T-cell (primary cell): ENCODE measurements at regions of chr20 and their contacts with region 1.

Region 1: GRCh38 chr20:54250691-54251090 is 42.8 kb downstream of the PFDN4 start:
- DNase-seq: no peak
- ATAC-seq: no peak
- H3K4me3 ChIP-seq: no peak overlapping the region
- H3K4me3 Mint-ChIP-seq: no peak overlapping the region
- H3K27ac ChIP-seq: no peak overlapping the region
- H3K27ac Mint-ChIP-seq: no peak overlapping the region
- H3K4me1 ChIP-seq: no peaks in the 10 kb centered on the region
- H3K4me1 Mint-ChIP-seq: no peaks in the 10 kb centered on the region
- H3K27me3 ChIP-seq: peaks cover 0 to 4% of the 10 kb centered on the region in 2 experiments
- H3K27me3 Mint-ChIP-seq: peaks cover 0 to 15% of the 10 kb centered on the region in 2 donors

Region 2: DNA sequence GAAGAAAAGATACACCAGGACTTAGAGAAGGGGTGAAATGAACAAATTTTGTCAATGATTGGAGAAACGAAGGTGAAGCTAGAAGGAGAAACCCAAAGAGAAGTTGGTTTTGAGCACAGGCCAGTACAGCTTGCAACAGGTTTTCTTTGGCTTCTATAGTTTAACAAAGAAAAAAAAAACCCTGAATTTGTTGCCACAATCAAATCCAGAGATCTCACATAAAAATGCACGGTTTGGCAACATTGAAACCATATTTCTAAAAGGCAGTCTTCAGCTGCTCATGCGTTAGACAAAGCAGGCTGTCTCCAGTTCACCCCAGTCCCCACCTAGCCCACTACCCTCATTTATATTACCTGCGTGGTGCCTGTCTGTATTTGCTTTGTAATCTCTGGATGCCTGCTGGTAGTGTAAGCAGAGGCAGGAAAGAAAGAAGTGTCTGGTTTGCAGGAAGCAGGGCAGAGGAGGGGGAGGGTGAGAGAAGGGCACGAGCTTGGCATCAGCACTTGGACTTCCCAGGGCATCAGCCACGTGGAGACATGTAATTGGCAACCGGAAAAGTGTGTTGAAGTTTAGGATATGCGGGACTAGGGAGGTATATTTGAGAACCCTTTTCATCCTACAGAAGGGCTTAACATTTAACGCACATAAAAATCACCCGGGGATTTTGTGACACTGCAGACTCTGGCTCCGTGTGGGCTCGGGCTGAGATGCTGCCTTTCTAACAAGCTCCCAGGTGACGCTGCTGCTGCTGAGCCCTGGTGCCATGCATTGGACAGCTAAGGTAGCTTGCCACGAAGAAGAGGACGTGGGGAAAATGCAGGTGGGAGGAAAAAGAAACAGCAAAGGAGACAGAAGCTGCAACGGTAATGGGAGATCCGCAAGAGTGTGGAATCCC is 28.4 kb before region 1 on chr20:
- CTCF ChIA-PET with region 1: no interaction called
- POLR2A ChIA-PET with region 1: no interaction called
- DNase-seq: no peak
- ATAC-seq: no peak
- H3K4me3 ChIP-seq: no peak overlapping the region
- H3K4me3 Mint-ChIP-seq: peak overlapping the region in 1 of 3 donors; percentile 4
- H3K27ac ChIP-seq: no peak overlapping the region
- H3K27ac Mint-ChIP-seq: peak overlapping the region; percentile 84 to 91
- H3K4me1 ChIP-seq: peaks cover 0 to 14% of the 10 kb centered on the region in 2 experiments
- H3K4me1 Mint-ChIP-seq: peaks cover 20 to 23% (median 22%) of the 10 kb centered on the region in 3 donors
- H3K27me3 ChIP-seq: no peaks in the 10 kb centered on the region
- H3K27me3 Mint-ChIP-seq: no peaks in the 10 kb centered on the region

Region 3: DNA sequence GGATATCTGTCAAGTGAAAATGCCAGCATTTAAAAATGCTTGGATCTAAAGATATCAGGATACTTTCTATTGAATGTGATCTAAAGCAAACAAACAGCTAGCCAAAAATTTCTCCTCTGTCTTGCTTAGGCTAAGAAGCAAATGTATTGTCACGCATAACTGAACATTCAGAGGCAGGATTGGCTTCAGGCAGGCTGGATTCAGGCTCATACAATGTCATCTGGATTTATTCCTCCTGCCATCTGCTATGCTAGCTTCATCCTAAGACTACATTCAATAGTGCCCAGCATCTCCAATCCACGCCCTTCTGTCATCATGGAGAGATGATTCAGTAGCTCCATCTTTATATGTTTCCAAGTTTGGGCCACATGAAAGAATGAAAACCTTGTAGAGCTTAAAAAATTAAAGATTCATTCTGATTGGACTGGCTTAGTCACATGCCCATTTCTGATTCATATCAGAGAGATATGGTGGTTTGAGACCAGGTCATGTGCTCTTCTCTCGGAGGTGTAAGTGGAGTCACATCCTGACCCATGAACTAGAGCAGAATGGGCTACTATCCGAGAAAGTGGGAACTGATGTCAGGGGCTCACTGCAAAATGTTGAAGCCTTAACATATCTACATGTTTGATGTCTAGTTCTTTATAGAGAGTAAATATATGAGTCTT is 15.6 kb before region 1 on chr20:
- CTCF ChIA-PET with region 1: no interaction called
- POLR2A ChIA-PET with region 1: interaction called in 1 of 2 experiments, 11 read pairs
- DNase-seq: no peak
- ATAC-seq: no peak
- H3K4me3 ChIP-seq: no peak overlapping the region
- H3K4me3 Mint-ChIP-seq: no peak overlapping the region
- H3K27ac ChIP-seq: no peak overlapping the region
- H3K27ac Mint-ChIP-seq: no peak overlapping the region
- H3K4me1 ChIP-seq: no peaks in the 10 kb centered on the region
- H3K4me1 Mint-ChIP-seq: no peaks in the 10 kb centered on the region
- H3K27me3 ChIP-seq: peaks cover 0 to 8% of the 10 kb centered on the region in 2 experiments
- H3K27me3 Mint-ChIP-seq: peaks cover 30 to 37% of the 10 kb centered on the region in 2 donors